ENCODE measurements at regions of chr2 and their contacts with region 1.

Region 1: GRCh38 chr2:211103989-211104388 is 547.6 kb downstream of the CPS1 start:
- DNase-seq: no peak
- ATAC-seq: no peak
- H3K4me3 ChIP-seq: no peak overlapping the region
- H3K27ac ChIP-seq: no peak overlapping the region
- H3K4me1 ChIP-seq: no peaks in the 10 kb centered on the region
- H3K27me3 ChIP-seq: no peaks in the 10 kb centered on the region
- CTCF ChIP-seq: no peak

Region 2: DNA sequence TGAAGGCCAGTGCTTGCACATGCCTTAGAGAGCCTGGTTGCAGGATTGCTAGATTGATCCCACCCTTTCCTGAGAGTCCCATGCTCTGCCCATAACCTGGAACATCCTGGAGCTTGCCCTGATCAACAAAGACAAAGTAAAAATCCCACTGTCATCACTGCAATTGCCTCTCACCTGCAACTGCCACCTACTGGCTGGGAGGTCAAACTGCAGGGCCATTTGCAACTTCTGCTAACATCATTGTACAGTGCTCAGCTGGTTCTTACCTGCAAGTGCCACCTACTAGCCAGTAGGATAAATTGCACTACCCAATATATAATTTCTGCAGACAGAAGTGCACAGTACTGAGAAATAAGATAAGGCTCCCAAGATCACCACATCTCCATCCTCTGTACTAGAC is 399.9 kb after region 1 on chr2:
- CTCF ChIA-PET with region 1: no interaction called
- POLR2A ChIA-PET with region 1: no interaction called
- in situ Hi-C with region 1: no loop called
- intact Hi-C with region 1: no loop called
- DNase-seq: no peak
- ATAC-seq: no peak
- H3K4me3 ChIP-seq: no peak overlapping the region
- H3K27ac ChIP-seq: no peak overlapping the region
- H3K4me1 ChIP-seq: no peaks in the 10 kb centered on the region
- H3K27me3 ChIP-seq: no peaks in the 10 kb centered on the region
- CTCF ChIP-seq: peak; percentile 41

Region 3: DNA sequence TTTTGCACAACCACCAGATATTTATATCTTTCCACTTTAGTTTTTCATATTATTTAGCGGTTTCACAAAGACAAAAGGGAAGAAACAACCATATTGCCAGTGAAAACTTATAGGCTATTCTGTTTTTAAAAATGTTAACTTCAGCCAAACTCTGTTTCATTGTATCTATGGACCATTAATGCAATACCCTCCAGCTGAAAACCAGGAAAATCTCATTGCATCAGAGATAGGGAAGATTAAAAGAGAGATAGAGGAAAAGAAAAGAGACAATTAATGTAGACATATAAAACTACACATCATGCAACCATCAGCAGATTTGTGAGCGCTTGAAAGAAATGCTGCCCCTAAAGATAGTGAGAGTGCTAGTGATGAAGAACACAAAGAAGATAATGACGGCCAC is 464.4 kb after region 1 on chr2:
- CTCF ChIA-PET with region 1: interaction called, 16 read pairs
- POLR2A ChIA-PET with region 1: no interaction called
- in situ Hi-C with region 1: no loop called
- intact Hi-C with region 1: no loop called
- DNase-seq: no peak
- ATAC-seq: no peak
- H3K4me3 ChIP-seq: no peak overlapping the region
- H3K27ac ChIP-seq: no peak overlapping the region
- H3K4me1 ChIP-seq: no peaks in the 10 kb centered on the region
- H3K27me3 ChIP-seq: no peaks in the 10 kb centered on the region
- CTCF ChIP-seq: no peak

Region 4: GRCh38 chr2:211879323-211879722 is 775.3 kb after region 1 on chr2:
- CTCF ChIA-PET with region 1: no interaction called
- POLR2A ChIA-PET with region 1: no interaction called
- in situ Hi-C with region 1: no loop called
- intact Hi-C with region 1: no loop called
- DNase-seq: no peak
- ATAC-seq: no peak
- H3K4me3 ChIP-seq: no peak overlapping the region
- H3K27ac ChIP-seq: no peak overlapping the region
- H3K4me1 ChIP-seq: no peaks in the 10 kb centered on the region
- H3K27me3 ChIP-seq: no peaks in the 10 kb centered on the region
- CTCF ChIP-seq: peak; percentile 7; the same call in 1 of the 2 replicates